Panc1 (cell line): ENCODE measurements at regions of chr7 and their contacts with region 1.

Region 1: GRCh38 chr7:5218564-5219360 is 28.7 kb downstream of the WIPI2 start:
- DNase-seq: no peak
- ATAC-seq: no peak
- H3K4me3 ChIP-seq: no peak overlapping the region
- H3K27ac ChIP-seq: no peak overlapping the region
- H3K4me1 ChIP-seq: peaks cover 3% of the 10 kb centered on the region; the same call in 1 of the 2 replicates
- H3K27me3 ChIP-seq: no peaks in the 10 kb centered on the region
- CTCF ChIP-seq: no peak

Region 2: DNA sequence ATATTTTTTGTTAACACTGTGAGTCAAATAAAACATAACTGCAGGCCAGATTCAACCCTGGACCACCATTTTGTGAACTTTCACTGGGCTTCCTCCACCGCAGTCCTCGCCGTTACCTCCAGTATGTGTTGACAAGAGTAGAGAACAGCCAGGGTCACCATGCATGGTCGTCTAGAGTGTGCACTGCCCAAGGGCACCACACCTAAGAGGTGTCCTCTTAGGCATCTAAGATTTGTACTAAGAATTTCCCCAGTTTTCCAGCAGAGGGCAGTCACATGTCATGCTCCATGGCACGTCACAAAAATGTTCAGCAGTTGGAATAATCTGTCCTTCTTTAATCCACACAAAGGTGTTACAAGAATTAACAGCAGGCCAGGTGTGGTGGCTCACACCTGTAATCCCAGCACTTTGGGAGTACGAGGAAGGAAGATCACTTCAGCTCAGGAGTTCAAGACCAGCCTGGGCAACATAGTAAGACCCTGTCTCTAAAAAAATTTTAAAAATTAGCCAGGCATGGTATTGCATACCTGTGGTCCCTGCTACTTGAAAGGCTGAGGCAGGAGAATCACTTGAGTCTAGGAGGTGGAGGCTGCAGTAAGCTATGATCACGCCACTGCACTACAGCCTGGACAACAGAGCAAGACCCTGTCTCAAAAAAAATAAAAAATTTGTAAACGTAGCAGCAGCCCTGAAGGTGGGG is 607.8 kb before region 1 on chr7:
- CTCF ChIA-PET with region 1: no interaction called
- POLR2A ChIA-PET with region 1: no interaction called
- in situ Hi-C with region 1: no loop called
- intact Hi-C with region 1: no loop called
- DNase-seq: peak; percentile 63
- ATAC-seq: peak; percentile 87
- H3K4me3 ChIP-seq: no peak overlapping the region
- H3K27ac ChIP-seq: no peak overlapping the region
- H3K4me1 ChIP-seq: peaks cover 5% of the 10 kb centered on the region; the same call in 1 of the 2 replicates
- H3K27me3 ChIP-seq: no peaks in the 10 kb centered on the region
- CTCF ChIP-seq: peak; percentile 96

Region 3: GRCh38 chr7:4692055-4692454 is 526.7 kb before region 1 on chr7:
- CTCF ChIA-PET with region 1: no interaction called
- POLR2A ChIA-PET with region 1: no interaction called
- in situ Hi-C with region 1: no loop called
- intact Hi-C with region 1: no loop called
- DNase-seq: no peak
- ATAC-seq: no peak
- H3K4me3 ChIP-seq: no peak overlapping the region
- H3K27ac ChIP-seq: no peak overlapping the region
- H3K4me1 ChIP-seq: peaks cover 20% of the 10 kb centered on the region
- H3K27me3 ChIP-seq: no peaks in the 10 kb centered on the region
- CTCF ChIP-seq: no peak

Region 4: DNA sequence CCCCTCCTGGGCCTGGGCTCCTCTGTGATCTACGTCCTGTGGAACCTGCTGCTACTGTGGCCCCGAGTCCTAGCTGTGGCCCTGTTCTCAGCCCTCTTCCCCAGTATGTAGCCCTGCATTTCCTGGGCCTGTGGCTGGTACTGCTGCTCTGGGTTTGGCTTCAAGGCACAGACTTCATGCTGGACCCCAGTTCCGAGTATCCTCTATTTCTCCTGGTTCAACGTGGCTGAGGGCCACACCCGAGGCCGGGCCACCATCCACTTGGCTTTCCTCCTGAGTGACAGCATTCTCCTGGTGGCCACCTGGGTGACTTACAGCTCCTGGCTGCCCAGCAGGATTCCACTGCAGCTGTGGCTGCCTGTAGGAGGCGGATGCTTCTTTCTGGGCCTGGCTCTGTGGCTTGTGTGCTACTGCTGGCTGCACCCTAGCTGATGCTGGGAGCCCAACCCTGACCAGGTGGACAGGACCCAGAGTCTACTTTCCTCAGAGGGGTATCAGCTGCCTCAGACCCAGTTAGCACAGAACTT is 222.0 kb before region 1 on chr7:
- CTCF ChIA-PET with region 1: no interaction called
- POLR2A ChIA-PET with region 1: no interaction called
- in situ Hi-C with region 1: no loop called
- intact Hi-C with region 1: no loop called
- DNase-seq: no peak
- ATAC-seq: no peak
- H3K4me3 ChIP-seq: no peak overlapping the region
- H3K27ac ChIP-seq: no peak overlapping the region
- H3K4me1 ChIP-seq: no peaks in the 10 kb centered on the region
- H3K27me3 ChIP-seq: no peaks in the 10 kb centered on the region
- CTCF ChIP-seq: no peak

Region 5: DNA sequence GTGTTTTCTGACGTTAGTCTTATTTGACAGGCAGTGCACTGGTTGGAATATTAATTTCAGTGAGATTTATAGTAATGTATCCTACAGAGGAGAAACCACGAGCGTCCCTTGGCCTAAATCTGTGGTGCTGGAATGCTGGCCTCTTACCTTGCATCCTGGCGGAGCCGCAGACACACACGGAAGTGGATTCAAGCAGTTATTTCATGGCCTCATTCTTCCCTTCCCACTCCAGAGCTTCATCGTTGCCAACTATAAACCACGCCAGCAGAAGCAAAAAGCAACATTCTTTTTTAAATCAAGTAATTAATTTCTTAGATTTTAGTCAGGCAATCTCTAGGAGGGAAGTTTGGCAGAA is 15.6 kb before region 1 on chr7:
- CTCF ChIA-PET with region 1: no interaction called
- POLR2A ChIA-PET with region 1: interaction called, 10 read pairs
- in situ Hi-C with region 1: no loop called
- intact Hi-C with region 1: no loop called
- DNase-seq: no peak
- ATAC-seq: no peak
- H3K4me3 ChIP-seq: no peak overlapping the region
- H3K27ac ChIP-seq: no peak overlapping the region
- H3K4me1 ChIP-seq: no peaks in the 10 kb centered on the region
- H3K27me3 ChIP-seq: no peaks in the 10 kb centered on the region
- CTCF ChIP-seq: no peak